Astrocyte of the cerebellum (primary cell): ENCODE measurements at regions of chr2 and their contacts with region 1.

Region 1: DNA sequence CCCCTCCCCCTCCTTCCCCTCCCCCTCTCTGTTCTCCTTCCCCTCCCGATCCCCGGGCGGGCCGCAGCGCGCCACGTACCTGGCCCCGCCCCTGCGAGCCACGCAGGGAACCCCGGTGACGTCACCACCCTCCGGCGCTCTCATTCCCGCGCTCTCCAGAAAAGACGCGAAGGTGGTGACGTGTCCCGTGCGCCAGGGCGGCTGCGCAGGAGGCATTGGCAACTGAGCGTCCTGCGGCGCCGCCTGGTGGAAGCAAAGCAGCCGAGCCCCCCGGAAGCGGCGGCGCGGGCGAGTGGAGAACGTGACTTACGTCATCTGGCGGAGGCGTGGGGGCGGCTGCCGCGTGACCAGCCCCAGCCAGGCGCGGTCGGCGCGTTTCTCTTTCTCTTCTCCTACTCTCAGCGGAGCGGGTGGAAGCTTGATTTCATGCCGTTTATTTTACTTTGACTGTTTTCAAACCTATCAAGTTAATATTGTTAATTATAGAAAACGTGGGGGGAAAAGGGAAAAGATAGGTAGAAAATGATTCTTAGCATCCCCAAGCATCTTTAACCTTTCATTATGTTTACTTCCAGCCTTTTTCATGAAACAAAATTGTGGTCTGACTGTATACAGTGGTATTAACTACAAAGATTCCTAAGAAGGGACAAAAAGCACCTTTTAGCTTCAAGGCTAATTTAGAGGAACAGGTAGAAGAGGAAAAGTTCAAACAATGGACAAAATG is 48.1 kb downstream of the C2orf42 start:
- DNase-seq: peak; percentile 97
- H3K4me3 ChIP-seq: peak overlapping the region; percentile 39
- CTCF ChIP-seq: peak; percentile 90

Region 2: DNA sequence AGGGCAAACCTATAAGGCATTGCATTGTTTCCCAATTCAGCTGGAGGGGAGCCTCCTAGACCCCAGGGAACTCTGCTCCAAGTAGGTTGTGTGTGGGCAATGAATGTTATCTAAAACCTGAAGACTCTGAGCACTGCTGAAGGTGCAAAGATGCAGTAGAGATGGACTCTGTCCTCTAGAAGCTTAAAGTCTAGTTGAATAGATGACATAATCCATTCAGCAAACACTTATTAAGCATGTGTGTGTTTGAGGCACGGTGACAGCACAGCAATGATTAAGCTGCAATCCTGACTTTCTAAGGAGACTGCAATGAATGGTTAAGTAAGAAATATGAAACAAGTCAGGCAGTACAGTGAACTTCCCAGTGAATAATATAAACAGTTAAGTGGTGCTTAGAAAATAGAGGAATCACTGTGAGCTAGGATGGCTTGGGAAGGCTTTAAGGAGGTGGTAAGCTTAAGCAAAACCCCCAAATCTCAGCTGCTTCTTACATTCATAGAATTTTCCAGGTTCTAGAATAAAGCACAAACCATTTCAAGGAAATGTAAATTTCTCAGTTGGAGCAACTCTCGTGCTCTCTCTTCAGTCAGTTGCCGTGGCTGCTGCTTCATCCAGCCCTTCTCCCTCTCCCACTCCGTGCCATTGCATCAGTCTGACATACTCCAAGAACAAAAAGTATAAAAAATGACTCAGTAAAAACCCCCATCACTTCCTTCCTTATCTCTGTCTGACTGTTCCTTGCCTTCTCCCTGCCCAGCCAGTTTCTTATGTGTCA is 208.7 kb before region 1 on chr2:
- in situ Hi-C with region 1: loop called (anchors 10 kb)
- DNase-seq: peak; percentile 18
- H3K4me3 ChIP-seq: no peak overlapping the region
- CTCF ChIP-seq: no peak

Region 3: GRCh38 chr2:70214953-70215549 is 72.3 kb after region 1 on chr2:
- in situ Hi-C with region 1: loop called (anchors 5 kb)
- DNase-seq: no peak
- H3K4me3 ChIP-seq: no peak overlapping the region
- CTCF ChIP-seq: no peak